Cardiac septum (tissue), 1 donor: ENCODE measurements at regions of chr11 and their contacts with region 1.

Region 1: DNA sequence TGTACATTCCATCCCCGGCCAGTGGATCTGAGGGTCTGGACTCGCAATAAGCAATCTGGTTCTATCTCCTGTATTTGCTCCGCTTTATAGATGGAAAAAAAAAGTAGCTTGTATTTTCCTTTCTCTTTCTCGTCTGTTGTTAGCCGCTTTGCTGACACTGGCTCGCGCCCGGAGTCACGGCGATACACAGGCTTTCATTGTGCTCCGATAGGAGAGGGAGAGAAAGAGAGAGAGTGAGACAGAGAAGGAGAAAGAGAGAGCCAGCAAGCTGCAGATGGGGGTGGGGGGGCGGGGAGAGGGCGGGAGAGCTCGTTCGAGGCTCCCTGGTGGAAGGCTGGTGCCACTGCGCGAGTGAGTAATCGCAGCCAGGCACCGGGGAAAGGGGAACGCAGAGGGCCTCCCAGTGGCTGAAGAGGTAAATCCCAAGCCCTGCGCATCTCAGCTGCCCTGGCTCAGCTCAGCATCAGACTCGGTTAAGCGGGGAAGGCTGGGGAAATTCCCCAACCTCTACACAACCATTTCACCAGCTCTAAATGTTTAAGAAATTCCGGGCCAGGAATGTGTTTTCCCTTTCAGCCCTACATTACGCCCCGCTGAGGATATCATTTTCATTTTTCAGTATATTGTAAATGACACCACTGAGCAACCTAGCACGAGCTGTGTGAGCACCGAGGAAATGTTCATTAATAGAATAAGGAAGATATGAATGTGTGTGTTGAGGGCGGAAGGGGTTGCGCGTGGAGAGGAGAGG is at the start of gene MAML2:
- DNase-seq: peak; percentile 97
- total RNA-seq, gene MAML2: 4.8 TPM

Region 2: GRCh38 chr11:95923728-95924413 is 419.3 kb before region 1 on chr11 and contains the start of gene MTMR2:
- intact Hi-C with region 1: loop called (anchors 1 kb)
- DNase-seq: peak; percentile 92
- total RNA-seq, gene MTMR2: 22.2 TPM

Region 3: DNA sequence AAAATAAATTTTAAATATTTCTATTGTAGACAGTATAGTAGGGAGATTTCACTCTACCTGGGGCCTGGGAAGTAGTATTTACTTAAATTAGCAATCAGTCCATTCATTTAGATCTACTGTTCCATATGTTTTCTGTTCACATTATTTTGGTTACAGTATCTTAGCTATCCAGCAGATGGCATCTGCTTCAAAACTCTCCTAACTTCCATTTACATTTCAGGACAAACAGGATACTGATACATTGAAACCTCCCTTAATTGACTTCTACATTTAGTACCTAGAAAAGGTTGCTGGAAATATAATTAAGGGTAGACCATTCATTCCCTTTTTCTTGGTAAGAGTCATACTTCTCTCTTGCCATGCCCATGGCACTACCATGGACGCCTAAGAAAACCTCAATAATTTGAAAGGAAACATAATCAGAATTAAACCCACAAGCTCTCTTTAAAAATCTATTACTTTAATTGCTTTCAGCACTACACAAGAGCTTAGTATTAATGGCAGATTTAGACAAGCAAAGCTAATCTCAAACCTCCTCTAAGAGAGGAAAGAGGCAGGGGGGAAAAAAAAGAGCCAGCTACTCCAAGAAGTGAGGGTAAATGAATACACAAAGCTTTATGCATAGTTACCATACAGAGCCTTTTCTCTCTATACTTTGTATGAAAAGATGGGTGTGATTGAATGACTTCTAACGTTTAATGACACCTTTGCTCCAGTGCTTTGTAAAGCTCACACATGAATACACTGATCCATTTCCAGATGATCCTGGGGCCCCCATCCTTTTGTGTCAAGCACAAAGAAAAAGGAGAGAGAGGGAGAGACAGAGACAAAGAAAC is 288.0 kb before region 1 on chr11:
- intact Hi-C with region 1: loop called (anchors 1 kb)
- DNase-seq: no peak

Region 4: GRCh38 chr11:96155627-96156378 is 187.3 kb before region 1 on chr11:
- intact Hi-C with region 1: loop called (anchors 1 kb)
- DNase-seq: peak; percentile 86

Region 5: DNA sequence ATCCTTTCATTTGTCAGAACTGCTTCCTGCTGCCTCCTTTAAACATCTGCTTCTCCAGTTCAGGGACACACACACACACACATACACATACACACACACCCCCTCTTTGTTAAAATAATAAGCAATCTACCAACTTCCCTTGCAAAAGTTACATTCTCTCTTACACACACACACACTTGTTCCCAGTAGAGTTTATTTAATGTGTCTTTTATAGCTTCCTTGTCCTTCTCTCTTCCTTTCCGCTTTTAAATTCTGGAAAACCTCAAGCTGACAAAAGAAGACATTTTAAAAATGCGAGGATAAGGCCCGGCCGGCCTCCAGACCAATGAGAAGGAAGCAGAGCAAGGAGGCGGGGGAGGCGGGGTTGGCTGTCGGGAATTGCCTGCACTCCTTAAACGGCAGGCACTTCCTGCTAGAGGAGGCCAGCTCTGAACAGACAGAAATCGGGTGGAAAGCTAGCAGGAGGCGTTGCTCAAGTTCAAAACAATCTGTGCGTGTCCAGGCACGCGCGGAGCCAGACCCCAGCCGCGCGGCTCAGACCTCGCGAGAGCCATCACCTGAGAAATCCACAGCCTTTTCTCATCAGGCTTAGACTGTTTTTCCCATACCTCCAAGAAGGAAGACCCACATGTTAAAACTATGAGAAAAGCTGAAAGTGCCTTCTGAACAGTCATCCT is 100.0 kb before region 1 on chr11:
- intact Hi-C with region 1: loop called (anchors 2 kb)
- DNase-seq: peak; percentile 97

Region 6: GRCh38 chr11:96306933-96307775 is 36.0 kb before region 1 on chr11:
- intact Hi-C with region 1: loop called (anchors 1 kb)
- DNase-seq: no peak

Region 7: GRCh38 chr11:96635655-96636054 is 292.5 kb after region 1 on chr11:
- intact Hi-C with region 1: no loop called
- DNase-seq: no peak